ENCODE measurements at regions of chr12 and their contacts with region 1.

Region 1: GRCh38 chr12:4276524-4277204 is 3.1 kb downstream of the CCND2 start:
- DNase-seq: peak; percentile 84 to 90
- H3K4me3 ChIP-seq: peak overlapping the region; percentile 90 to 97 (median 96); a peak in 4 of 8 replicates
- H3K27ac ChIP-seq: no peak overlapping the region
- H3K4me1 ChIP-seq: peaks cover 9 to 30% (median 13%) of the 10 kb centered on the region in 4 experiments
- H3K27me3 ChIP-seq: peaks cover 0 to 10% (median 7%) of the 10 kb centered on the region in 4 experiments; a peak in 5 of 7 replicates
- CTCF ChIP-seq: peak; percentile 74 to 92 (median 92)
- EP300 ChIP-seq: peak in 1 of 2 experiments; percentile 85; a peak in 2 of 3 replicates
- POLR2A ChIP-seq: peak in 1 of 2 experiments; percentile 58; a peak in 1 of 3 replicates
- RAD21 ChIP-seq: peak; percentile 97 to 99

Region 2: GRCh38 chr12:3988519-3989448 is 287.9 kb before region 1 on chr12:
- CTCF ChIA-PET with region 1: interaction called, 10 read pairs
- POLR2A ChIA-PET with region 1: interaction called, 5 read pairs
- DNase-seq: no peak
- H3K4me3 ChIP-seq: no peak overlapping the region
- H3K27ac ChIP-seq: no peak overlapping the region
- H3K4me1 ChIP-seq: no peaks in the 10 kb centered on the region; a peak in 1 of 7 replicates
- H3K27me3 ChIP-seq: no peaks in the 10 kb centered on the region
- CTCF ChIP-seq: no peak
- EP300 ChIP-seq: no peak
- POLR2A ChIP-seq: no peak
- RAD21 ChIP-seq: no peak

Region 3: GRCh38 chr12:4030929-4031702 is 245.5 kb before region 1 on chr12:
- CTCF ChIA-PET with region 1: interaction called, 52 read pairs
- POLR2A ChIA-PET with region 1: interaction called, 5 read pairs
- DNase-seq: peak; percentile 85 to 91
- H3K4me3 ChIP-seq: peak overlapping the region in 1 of 4 experiments; percentile 42; a peak in 4 of 8 replicates
- H3K27ac ChIP-seq: peak overlapping the region; percentile 29; the same call in 1 of the 2 replicates
- H3K4me1 ChIP-seq: peaks cover 14 to 33% (median 23%) of the 10 kb centered on the region in 4 experiments
- H3K27me3 ChIP-seq: peaks cover 2 to 15% (median 6%) of the 10 kb centered on the region in 4 experiments
- CTCF ChIP-seq: no peak
- EP300 ChIP-seq: no peak
- POLR2A ChIP-seq: peak in 1 of 2 experiments; percentile 53; a peak in 1 of 3 replicates
- RAD21 ChIP-seq: peak in 1 of 2 experiments; percentile 4; a peak in 1 of 4 replicates

Region 4: GRCh38 chr12:4118017-4118510 is 158.6 kb before region 1 on chr12:
- CTCF ChIA-PET with region 1: interaction called, 41 read pairs
- POLR2A ChIA-PET with region 1: interaction called, 58 read pairs
- DNase-seq: peak in 1 of 2 experiments; percentile 32
- H3K4me3 ChIP-seq: no peak overlapping the region
- H3K27ac ChIP-seq: no peak overlapping the region
- H3K4me1 ChIP-seq: peaks cover 3 to 10% (median 6%) of the 10 kb centered on the region in 4 experiments; a peak in 6 of 7 replicates
- H3K27me3 ChIP-seq: no peaks in the 10 kb centered on the region
- CTCF ChIP-seq: no peak
- EP300 ChIP-seq: no peak
- POLR2A ChIP-seq: no peak
- RAD21 ChIP-seq: no peak

Region 5: GRCh38 chr12:4164559-4165558 is 111.8 kb before region 1 on chr12:
- CTCF ChIA-PET with region 1: interaction called, 12 read pairs
- POLR2A ChIA-PET with region 1: interaction called, 29 read pairs
- DNase-seq: peak; percentile 51 to 78
- H3K4me3 ChIP-seq: peak overlapping the region; percentile 44 to 65 (median 49)
- H3K27ac ChIP-seq: peak overlapping the region; percentile 73; the same call in 1 of the 2 replicates
- H3K4me1 ChIP-seq: peaks cover 4 to 18% (median 10%) of the 10 kb centered on the region in 4 experiments
- H3K27me3 ChIP-seq: peaks cover 0 to 7% (median 5%) of the 10 kb centered on the region in 4 experiments; a peak in 4 of 7 replicates
- CTCF ChIP-seq: no peak
- EP300 ChIP-seq: no peak
- POLR2A ChIP-seq: peak in 1 of 2 experiments; percentile 59; a peak in 1 of 3 replicates
- RAD21 ChIP-seq: no peak

Region 6: DNA sequence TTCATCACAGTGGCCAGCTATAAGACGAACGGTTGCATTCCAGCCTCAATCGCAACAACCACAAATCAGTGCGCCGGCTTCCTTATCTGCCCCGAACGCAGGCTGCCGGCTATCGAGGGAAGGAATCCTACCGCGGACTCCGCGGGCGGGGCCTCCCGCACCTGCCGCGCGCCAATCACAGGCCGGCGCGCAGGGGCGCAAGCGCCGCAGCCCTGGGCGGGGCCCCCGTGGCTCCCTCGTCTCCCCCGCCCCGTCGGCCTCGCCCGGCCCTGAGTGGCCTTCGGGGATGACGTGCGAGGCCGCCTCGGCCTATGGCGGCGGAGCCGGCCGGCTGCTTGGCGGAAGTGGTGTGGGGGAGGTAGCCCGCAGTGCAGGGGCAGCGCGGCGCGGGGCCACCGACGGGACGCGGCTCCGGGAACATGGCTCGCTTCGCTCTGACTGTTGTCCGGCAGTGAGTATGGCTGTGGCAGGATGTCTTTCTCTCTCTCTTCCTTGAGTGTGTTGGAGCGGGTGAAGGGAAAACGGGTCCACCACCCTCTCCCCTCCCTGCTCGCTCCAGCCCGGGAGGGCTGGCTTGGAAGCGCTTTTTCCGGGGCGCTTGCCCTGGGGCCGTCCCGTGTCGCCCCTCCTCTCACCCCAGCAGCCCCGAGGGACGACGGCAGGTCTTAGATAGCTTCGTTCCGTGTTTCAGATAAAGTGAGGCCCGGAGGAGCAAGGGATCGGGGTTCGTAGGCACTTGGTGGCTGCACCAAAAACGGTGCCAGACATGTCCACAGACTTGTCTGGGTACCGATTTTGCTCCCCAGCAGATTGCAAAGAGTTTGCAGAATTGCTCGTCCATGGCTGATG is 44.4 kb after region 1 on chr12 and contains the start of gene TIGAR:
- CTCF ChIA-PET with region 1: interaction called, 3 read pairs
- POLR2A ChIA-PET with region 1: interaction called, 16 read pairs
- DNase-seq: peak; percentile 75 to 89
- H3K4me3 ChIP-seq: peak within 1 kb of the TSS; percentile 78 to 95 (median 88)
- H3K27ac ChIP-seq: peak within 1 kb of the TSS; percentile 83
- H3K4me1 ChIP-seq: peaks cover 0 to 6% (median 1%) of the 10 kb centered on the region in 4 experiments; a peak in 4 of 7 replicates
- H3K27me3 ChIP-seq: peaks cover 0 to 3% (median 0%) of the 10 kb centered on the region in 4 experiments; a peak in 2 of 7 replicates
- CTCF ChIP-seq: no peak
- EP300 ChIP-seq: peak in 1 of 2 experiments; percentile 16; a peak in 1 of 3 replicates
- POLR2A ChIP-seq: peak; percentile 82 to 90
- RAD21 ChIP-seq: no peak
- total RNA-seq, gene TIGAR: 26.4 and 27.6 TPM in 2 replicates

Region 7: GRCh38 chr12:4370265-4370664 is 93.6 kb after region 1 on chr12:
- CTCF ChIA-PET with region 1: no interaction called
- POLR2A ChIA-PET with region 1: no interaction called
- DNase-seq: no peak
- H3K4me3 ChIP-seq: no peak overlapping the region
- H3K27ac ChIP-seq: no peak overlapping the region
- H3K4me1 ChIP-seq: no peaks in the 10 kb centered on the region
- H3K27me3 ChIP-seq: no peaks in the 10 kb centered on the region
- CTCF ChIP-seq: no peak
- EP300 ChIP-seq: no peak
- POLR2A ChIP-seq: no peak
- RAD21 ChIP-seq: no peak

Measured in H1 (cell line).